Activated CD4-positive, alpha-beta memory T cell treated with anti-CD3 and anti-CD28 coated beads, Interleukin-2, amount 10 ng/mL, durations not matched to agents 7 days and 5 days (primary cell): ENCODE measurements at regions of chr17 and their contacts with region 1.

Region 1: DNA sequence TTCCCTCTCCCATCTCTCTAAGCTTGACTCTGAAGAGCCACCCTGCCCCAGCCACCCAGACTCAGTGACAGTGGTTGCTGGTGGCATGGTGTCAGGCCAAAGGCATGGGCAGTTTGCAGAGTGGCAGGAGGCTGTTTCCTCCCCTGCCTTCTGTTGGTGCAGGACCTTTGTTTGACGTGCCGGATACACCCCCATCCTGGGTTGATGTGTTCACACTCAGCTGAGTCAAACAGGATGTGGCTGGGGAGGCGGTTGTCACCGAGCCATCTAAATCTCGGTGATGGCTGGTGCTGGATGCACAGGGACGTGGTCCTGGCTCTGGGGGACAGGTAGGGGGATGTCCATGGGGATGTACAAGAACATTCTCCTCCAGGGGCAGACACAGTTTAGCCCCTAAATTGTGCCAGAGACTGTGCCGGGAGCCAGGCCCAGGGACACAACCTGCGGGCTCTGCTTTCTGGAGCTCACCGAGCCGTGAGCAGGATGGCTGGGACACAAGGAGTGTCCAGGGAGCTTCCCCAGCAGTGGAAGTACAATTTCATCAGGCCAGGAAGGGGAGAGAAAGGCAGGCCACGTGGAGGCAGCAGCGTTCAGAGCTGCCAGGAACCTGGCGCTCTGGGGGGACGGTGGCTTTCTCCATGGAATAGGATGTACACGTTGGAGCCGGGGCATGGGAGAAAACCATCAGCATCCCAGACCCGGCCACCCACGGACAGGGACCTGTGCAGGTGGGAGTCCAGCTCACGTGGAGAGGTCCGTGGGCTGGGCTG is 264.2 kb downstream of the SEC14L1 start:
- DNase-seq: peak; percentile 91
- H3K4me3 Mint-ChIP-seq: peak overlapping the region; percentile 92
- H3K27ac Mint-ChIP-seq: peak overlapping the region; percentile 94
- H3K4me1 Mint-ChIP-seq: peaks cover 95% of the 10 kb centered on the region
- H3K27me3 Mint-ChIP-seq: no peaks in the 10 kb centered on the region

Region 2: DNA sequence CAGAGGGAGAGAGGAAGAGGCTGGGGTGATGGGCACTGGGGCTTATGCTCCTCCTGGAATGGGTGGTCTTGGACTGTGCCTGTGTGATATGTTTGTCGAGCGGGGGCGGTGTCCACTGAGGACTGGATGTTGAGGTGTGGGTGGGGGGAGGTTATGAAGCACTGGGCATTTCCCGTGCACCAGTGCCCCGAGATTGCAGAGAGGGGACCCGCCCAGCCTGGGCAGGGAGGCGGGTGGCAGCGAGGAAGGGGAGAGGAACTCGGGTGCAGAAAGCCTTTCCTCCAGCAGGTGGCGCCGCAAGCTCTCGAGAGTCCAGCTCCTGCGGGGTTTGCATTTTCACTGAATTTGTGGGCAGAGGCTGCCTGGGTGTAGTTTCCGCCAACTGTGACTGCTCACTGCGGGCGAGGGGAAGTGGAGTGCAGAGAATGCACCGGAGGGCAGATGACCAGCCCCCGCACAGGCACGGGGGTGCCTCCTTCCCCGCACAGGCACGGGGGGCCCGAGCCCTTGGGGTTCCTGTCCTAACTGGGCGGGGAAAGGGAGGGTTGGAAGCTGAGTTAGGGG is 73.6 kb before region 1 on chr17:
- CTCF ChIA-PET with region 1: interaction called, 39 read pairs
- POLR2A ChIA-PET with region 1: interaction called, 27 read pairs
- DNase-seq: peak; percentile 97
- H3K4me3 Mint-ChIP-seq: peak overlapping the region; percentile 73
- H3K27ac Mint-ChIP-seq: peak overlapping the region; percentile 90
- H3K4me1 Mint-ChIP-seq: peaks cover 46% of the 10 kb centered on the region
- H3K27me3 Mint-ChIP-seq: no peaks in the 10 kb centered on the region

Region 3: GRCh38 chr17:77382966-77383612 is 21.9 kb before region 1 on chr17:
- CTCF ChIA-PET with region 1: interaction called, 10 read pairs
- POLR2A ChIA-PET with region 1: interaction called, 140 read pairs
- DNase-seq: no peak
- H3K4me3 Mint-ChIP-seq: no peak overlapping the region
- H3K27ac Mint-ChIP-seq: peak overlapping the region; percentile 75
- H3K4me1 Mint-ChIP-seq: peaks cover 85% of the 10 kb centered on the region
- H3K27me3 Mint-ChIP-seq: no peaks in the 10 kb centered on the region

Region 4: DNA sequence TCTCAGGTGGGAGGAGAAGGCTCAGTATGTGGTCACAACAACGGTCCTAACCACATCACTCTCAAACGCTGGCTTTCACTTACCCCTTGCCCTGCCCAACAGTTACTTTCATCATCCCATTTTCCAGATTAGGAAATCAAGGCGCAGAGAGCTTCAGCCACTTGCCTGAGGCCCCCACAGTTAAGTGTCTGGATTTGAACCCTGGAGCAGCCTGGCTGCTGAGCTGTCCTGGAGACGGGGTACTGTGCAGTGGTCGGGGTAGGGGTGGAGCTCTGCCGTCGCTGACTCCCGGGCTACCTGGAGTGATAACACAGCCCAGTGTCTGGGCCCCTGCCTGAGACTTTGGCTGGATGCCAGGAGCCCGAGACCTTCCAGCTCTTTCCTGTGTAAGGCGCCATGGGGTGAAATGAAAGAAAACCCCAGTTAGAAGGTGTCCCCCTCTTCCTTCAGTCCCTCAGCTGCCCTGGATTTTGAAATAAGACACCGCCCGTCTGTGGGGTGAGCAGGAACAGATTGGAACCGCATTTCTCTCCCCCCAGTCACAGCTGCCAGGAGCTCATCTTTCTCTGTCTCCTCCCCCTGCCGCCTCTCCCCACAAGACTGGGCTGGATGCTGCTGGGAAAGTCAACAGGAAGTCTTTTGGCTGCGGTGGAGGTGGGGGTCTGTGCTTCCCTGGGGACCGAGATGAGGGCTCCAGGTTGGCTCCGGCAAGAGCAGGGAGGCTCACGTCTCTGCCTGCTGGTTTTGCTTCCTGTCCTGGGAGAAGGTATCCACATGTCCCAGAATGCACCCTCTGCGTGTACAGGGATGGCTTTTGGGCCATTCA is 16.0 kb after region 1 on chr17:
- CTCF ChIA-PET with region 1: interaction called, 18 read pairs
- POLR2A ChIA-PET with region 1: interaction called, 22 read pairs
- DNase-seq: peak; percentile 38
- H3K4me3 Mint-ChIP-seq: peak overlapping the region; percentile 51
- H3K27ac Mint-ChIP-seq: peak overlapping the region; percentile 61
- H3K4me1 Mint-ChIP-seq: peaks cover 50% of the 10 kb centered on the region
- H3K27me3 Mint-ChIP-seq: no peaks in the 10 kb centered on the region

Region 5: GRCh38 chr17:77444984-77445759 is 40.2 kb after region 1 on chr17:
- CTCF ChIA-PET with region 1: interaction called, 26 read pairs
- POLR2A ChIA-PET with region 1: interaction called, 78 read pairs
- DNase-seq: peak; percentile 90
- H3K4me3 Mint-ChIP-seq: peak overlapping the region; percentile 78
- H3K27ac Mint-ChIP-seq: peak overlapping the region; percentile 96
- H3K4me1 Mint-ChIP-seq: peaks cover 97% of the 10 kb centered on the region
- H3K27me3 Mint-ChIP-seq: no peaks in the 10 kb centered on the region

Region 6: GRCh38 chr17:77465358-77466041 is 60.5 kb after region 1 on chr17:
- CTCF ChIA-PET with region 1: interaction called, 4 read pairs
- POLR2A ChIA-PET with region 1: interaction called, 13 read pairs
- DNase-seq: peak; percentile 87
- H3K4me3 Mint-ChIP-seq: peak overlapping the region; percentile 59
- H3K27ac Mint-ChIP-seq: peak overlapping the region; percentile 86
- H3K4me1 Mint-ChIP-seq: peaks cover 84% of the 10 kb centered on the region
- H3K27me3 Mint-ChIP-seq: no peaks in the 10 kb centered on the region

Region 7: DNA sequence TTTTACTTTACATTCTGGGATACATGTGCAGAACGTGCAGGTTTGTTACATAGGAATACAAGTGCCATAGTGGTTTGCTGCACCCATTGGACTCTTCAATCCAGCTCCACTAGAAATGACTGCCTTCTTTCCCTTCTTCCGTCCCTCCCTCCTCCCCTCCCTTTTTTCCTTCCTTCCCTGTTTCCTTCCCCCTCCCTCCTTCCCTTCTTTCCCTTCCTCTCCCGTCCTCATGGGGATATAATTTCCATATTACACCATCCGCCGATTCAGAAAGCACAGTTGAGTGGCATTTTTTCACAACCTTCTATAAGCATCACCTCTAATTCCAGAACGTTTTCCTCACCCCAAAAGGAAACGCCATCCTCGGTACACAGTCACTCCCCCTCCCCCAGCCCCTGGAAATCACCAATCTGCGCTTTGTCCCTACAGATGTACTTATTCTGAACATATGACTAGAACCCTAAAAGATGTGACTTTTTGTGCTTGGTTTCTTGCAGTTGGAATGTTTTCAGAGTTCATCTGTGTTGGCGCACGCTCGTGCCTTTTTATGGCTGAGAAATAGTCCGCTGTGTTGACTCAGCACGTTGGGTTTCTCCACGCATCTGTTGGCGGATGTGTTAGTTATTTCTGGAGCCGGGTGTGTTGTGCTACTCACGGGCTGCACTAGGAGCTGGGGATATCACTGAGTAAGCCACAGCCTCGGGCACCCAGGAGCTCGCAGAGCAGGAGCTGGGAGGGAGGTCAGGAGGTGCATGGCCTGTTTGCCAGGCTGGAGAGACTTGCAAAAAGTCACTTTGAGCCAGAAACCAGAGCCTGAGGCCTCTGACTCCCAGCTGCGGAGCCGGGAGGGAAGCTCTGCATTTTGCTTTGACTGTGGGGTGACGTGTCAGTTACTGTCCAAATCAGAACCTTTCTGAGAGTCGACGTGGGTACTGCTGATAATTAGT is 72.2 kb after region 1 on chr17:
- CTCF ChIA-PET with region 1: interaction called, 19 read pairs
- POLR2A ChIA-PET with region 1: interaction called, 12 read pairs
- DNase-seq: no peak
- H3K4me3 Mint-ChIP-seq: no peak overlapping the region
- H3K27ac Mint-ChIP-seq: peak overlapping the region; percentile 40
- H3K4me1 Mint-ChIP-seq: peaks cover 69% of the 10 kb centered on the region
- H3K27me3 Mint-ChIP-seq: no peaks in the 10 kb centered on the region